Naive thymus-derived CD4-positive, alpha-beta T cell (primary cell): ENCODE measurements at regions of chr12 and their contacts with region 1.

Region 1: GRCh38 chr12:21657326-21658077 is at the start of gene LDHB:
- DNase-seq: peak; percentile 69 to 96 (median 91)
- ATAC-seq: peak; percentile 98
- H3K4me3 ChIP-seq: peak within 1 kb of the TSS; percentile 89
- H3K4me3 Mint-ChIP-seq: peak within 1 kb of the TSS; percentile 89 to 100 (median 97)
- H3K27ac ChIP-seq: peak within 1 kb of the TSS; percentile 83
- H3K27ac Mint-ChIP-seq: peak within 1 kb of the TSS; percentile 86 to 100 (median 95)
- H3K4me1 ChIP-seq: peaks cover 25 to 47% of the 10 kb centered on the region in 2 donors
- H3K4me1 Mint-ChIP-seq: peaks cover 36 to 70% (median 61%) of the 10 kb centered on the region in 7 donors
- H3K27me3 ChIP-seq: no peaks in the 10 kb centered on the region
- H3K27me3 Mint-ChIP-seq: peaks cover 0 to 8% (median 0%) of the 10 kb centered on the region in 5 donors
- total RNA-seq, gene LDHB: 630 to 1,306 (median 1,079) TPM

Region 2: DNA sequence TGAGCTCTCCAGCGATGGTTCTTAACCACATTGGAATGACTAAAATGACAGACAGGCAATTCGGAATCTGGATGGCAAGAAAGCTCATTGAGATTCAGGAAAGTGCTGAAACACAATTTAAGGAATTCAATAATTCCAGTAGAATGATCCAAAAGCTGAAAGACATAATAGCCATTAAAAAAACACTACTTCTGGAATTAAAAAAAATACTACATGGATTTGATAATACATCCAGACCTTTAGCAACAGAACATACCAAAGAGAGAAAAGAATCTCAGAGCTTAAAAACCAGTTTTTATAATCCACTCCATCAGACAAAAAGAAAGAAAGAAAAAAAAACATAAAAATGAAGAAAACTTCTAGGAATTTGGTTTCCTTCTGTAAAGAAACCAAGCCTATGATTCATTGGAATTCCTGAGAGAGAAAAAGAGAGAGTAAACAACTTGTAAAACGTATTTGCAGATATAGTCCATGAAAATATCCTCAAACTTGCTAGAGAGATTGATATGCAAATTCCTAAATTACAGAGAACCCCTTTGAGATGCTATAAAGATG is 473.7 kb before region 1 on chr12:
- CTCF ChIA-PET with region 1: no interaction called
- POLR2A ChIA-PET with region 1: no interaction called
- intact Hi-C with region 1: no loop called
- DNase-seq: no peak
- ATAC-seq: no peak
- H3K4me3 ChIP-seq: no peak overlapping the region
- H3K4me3 Mint-ChIP-seq: no peak overlapping the region
- H3K27ac ChIP-seq: no peak overlapping the region
- H3K27ac Mint-ChIP-seq: no peak overlapping the region
- H3K4me1 ChIP-seq: no peaks in the 10 kb centered on the region
- H3K4me1 Mint-ChIP-seq: no peaks in the 10 kb centered on the region
- H3K27me3 ChIP-seq: no peaks in the 10 kb centered on the region
- H3K27me3 Mint-ChIP-seq: no peaks in the 10 kb centered on the region

Region 3: GRCh38 chr12:21438643-21439042 is 218.9 kb before region 1 on chr12:
- CTCF ChIA-PET with region 1: no interaction called
- POLR2A ChIA-PET with region 1: interaction called, 7 read pairs
- intact Hi-C with region 1: loop called (anchors 1 kb)
- DNase-seq: no peak
- ATAC-seq: no peak
- H3K4me3 ChIP-seq: peak overlapping the region; percentile 91
- H3K4me3 Mint-ChIP-seq: peak overlapping the region; percentile 94 to 99 (median 98)
- H3K27ac ChIP-seq: peak overlapping the region; percentile 81
- H3K27ac Mint-ChIP-seq: peak overlapping the region; percentile 92 to 99 (median 97)
- H3K4me1 ChIP-seq: peaks cover 11 to 22% of the 10 kb centered on the region in 2 donors
- H3K4me1 Mint-ChIP-seq: peaks cover 32 to 72% (median 49%) of the 10 kb centered on the region in 7 donors
- H3K27me3 ChIP-seq: no peaks in the 10 kb centered on the region
- H3K27me3 Mint-ChIP-seq: peaks cover 0 to 10% (median 0%) of the 10 kb centered on the region in 5 donors

Region 4: DNA sequence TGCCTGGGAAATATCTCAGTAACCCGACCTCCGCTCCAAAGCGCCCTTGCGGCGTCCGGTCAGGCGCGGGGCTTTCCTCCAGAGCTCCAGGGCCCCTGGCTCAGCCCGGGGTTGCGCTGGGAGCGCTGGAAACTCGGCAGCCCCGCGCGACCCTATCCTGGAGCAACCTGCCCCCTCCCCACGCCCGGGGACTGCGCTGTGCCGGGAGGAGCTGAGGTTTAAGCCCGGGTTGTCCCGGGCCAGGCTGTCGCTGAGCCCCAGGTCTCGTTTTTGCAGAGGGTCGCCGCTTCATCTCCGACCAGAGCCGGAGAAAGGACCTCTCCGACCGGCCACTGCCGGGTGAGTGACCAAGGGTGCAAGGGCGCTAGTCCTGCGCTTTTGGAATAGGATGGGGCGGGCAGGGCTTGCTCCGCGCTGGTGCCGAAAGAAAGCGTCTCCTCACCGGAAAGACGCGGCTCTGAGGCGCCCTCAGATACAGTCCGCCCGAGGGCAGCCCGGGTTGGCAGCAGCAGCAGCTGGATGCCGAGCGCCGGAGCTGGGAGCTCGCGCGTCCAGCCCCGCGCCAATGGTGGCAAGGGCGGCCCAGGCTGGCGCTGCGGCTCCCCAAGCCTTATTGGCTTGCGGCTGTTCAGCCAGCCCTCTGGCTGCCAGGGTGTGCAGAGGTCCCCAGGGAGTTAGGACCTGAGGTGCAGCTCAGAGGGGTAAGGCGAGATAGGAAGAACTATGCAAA is 129.9 kb before region 1 on chr12:
- CTCF ChIA-PET with region 1: no interaction called
- POLR2A ChIA-PET with region 1: interaction called, 3 read pairs
- intact Hi-C with region 1: loop called in 1 of 2 experiments (anchors 5 kb)
- DNase-seq: peak; percentile 33 to 69 (median 61)
- ATAC-seq: peak; percentile 95
- H3K4me3 ChIP-seq: peak overlapping the region; percentile 63
- H3K4me3 Mint-ChIP-seq: peak overlapping the region; percentile 69 to 87 (median 80)
- H3K27ac ChIP-seq: no peak overlapping the region
- H3K27ac Mint-ChIP-seq: no peak overlapping the region
- H3K4me1 ChIP-seq: peaks cover 0 to 3% of the 10 kb centered on the region in 2 donors
- H3K4me1 Mint-ChIP-seq: peaks cover 0 to 13% (median 8%) of the 10 kb centered on the region in 7 donors
- H3K27me3 ChIP-seq: no peaks in the 10 kb centered on the region
- H3K27me3 Mint-ChIP-seq: peaks cover 18 to 54% (median 37%) of the 10 kb centered on the region in 5 donors

Region 5: GRCh38 chr12:21631367-21631766 is 26.1 kb before region 1 on chr12:
- CTCF ChIA-PET with region 1: interaction called, 3 read pairs
- POLR2A ChIA-PET with region 1: interaction called, 21 read pairs
- intact Hi-C with region 1: no loop called
- DNase-seq: no peak
- ATAC-seq: no peak
- H3K4me3 ChIP-seq: no peak overlapping the region
- H3K4me3 Mint-ChIP-seq: peak overlapping the region in 1 of 10 donors; percentile 13
- H3K27ac ChIP-seq: no peak overlapping the region
- H3K27ac Mint-ChIP-seq: peak overlapping the region in 6 of 9 donors; percentile 49 to 76 (median 64)
- H3K4me1 ChIP-seq: no peaks in the 10 kb centered on the region
- H3K4me1 Mint-ChIP-seq: peaks cover 0 to 35% (median 16%) of the 10 kb centered on the region in 7 donors
- H3K27me3 ChIP-seq: no peaks in the 10 kb centered on the region
- H3K27me3 Mint-ChIP-seq: no peaks in the 10 kb centered on the region

Region 6: DNA sequence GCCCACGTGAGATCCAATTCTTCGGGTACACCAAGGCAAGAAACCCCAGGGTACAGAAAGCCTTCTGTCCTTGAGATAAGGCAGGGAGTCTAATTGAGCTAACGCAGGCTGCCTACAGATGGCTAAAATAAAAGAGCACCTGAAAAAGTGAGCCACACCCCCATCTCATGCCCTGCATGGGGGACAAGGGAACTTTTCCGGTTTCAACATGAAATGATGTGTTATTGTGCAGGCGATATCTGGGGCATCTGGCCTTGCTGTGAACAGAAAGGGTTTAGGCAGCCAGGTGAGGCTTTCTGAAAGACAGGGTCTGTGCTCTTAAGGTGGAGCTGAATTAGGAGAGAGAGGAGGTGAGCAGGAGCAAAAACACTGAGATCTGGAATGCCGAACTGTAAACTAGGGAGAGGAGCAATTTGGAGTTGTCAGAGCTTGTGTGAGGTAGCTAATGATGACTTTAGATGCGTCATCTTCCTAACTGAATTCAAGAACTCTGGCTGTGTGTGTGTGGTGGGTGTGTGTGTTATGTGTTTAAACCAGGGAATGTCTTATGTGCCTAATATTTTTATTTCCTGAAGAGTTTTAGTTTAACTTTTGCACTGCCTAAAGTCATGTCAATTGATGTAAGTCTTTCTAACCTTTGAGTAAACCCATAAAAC is 20.2 kb after region 1 on chr12:
- CTCF ChIA-PET with region 1: interaction called, 25 read pairs
- POLR2A ChIA-PET with region 1: interaction called, 242 read pairs
- intact Hi-C with region 1: loop called (anchors 1 kb)
- DNase-seq: peak in 7 of 9 donors; percentile 29 to 49 (median 42)
- ATAC-seq: peak; percentile 51
- H3K4me3 ChIP-seq: peak overlapping the region; percentile 47
- H3K4me3 Mint-ChIP-seq: peak overlapping the region; percentile 36 to 91 (median 86)
- H3K27ac ChIP-seq: peak overlapping the region; percentile 60
- H3K27ac Mint-ChIP-seq: peak overlapping the region in 8 of 9 donors; percentile 72 to 94 (median 88)
- H3K4me1 ChIP-seq: peaks cover 6 to 54% of the 10 kb centered on the region in 2 donors
- H3K4me1 Mint-ChIP-seq: peaks cover 26 to 68% (median 58%) of the 10 kb centered on the region in 7 donors
- H3K27me3 ChIP-seq: no peaks in the 10 kb centered on the region
- H3K27me3 Mint-ChIP-seq: peaks cover 0 to 3% (median 0%) of the 10 kb centered on the region in 5 donors

Region 7: DNA sequence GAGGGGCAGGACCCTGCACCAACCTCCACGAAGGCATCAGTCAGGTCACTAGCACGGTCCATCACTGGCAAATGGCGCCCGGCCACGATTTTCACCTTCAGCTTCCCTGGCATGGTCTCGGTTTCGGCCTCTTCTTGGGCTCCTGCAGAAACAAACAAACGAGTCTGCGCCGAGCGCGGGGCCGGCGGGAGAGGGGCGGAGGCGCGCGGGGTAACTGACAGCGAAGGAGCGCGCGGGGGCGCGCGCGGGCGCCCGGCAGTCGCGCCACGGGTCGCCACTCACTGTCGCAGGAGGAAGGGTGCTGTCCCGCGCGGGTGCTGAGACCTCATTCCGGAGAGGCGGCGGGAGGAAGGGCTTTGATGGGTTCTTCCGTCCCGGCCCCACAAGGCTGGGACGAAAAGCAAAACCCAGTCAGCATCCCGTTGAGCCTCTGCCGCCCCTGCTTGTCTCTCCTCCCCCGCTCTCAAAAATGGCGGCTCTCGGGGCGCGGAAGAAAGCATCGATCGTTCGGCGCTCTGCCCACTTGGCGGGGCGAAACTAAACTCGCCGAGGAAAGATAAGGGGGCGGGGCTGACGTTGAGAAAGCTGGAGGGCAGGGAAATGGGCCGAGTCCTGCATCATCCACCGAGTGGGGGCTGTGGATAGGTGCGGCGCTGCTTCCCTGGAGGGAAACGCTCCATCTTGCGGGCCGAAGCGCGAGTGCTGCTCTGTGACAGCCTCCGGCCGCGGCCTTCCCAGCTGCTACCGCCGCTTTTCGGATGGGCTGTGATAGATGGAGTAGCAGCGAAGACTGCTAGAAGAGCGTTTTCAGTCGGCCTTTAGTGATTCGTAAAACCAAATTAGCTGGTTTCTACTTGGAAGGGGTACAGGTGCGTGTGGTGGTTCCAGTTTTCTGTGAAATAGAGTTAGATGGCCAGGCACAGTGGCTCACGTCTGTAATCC is 886.8 kb after region 1 on chr12 and contains the start of gene C2CD5:
- CTCF ChIA-PET with region 1: no interaction called
- POLR2A ChIA-PET with region 1: interaction called, 6 read pairs
- intact Hi-C with region 1: loop called (anchors 1 to 5 kb)
- DNase-seq: peak; percentile 84 to 96 (median 96)
- ATAC-seq: peak; percentile 96
- H3K4me3 ChIP-seq: peak within 1 kb of the TSS; percentile 95
- H3K4me3 Mint-ChIP-seq: peak within 1 kb of the TSS; percentile 91 to 98 (median 92)
- H3K27ac ChIP-seq: peak within 1 kb of the TSS; percentile 79
- H3K27ac Mint-ChIP-seq: peak within 1 kb of the TSS; percentile 94 to 98 (median 95)
- H3K4me1 ChIP-seq: peaks cover 7 to 18% of the 10 kb centered on the region in 2 donors
- H3K4me1 Mint-ChIP-seq: peaks cover 32 to 47% (median 38%) of the 10 kb centered on the region in 7 donors
- H3K27me3 ChIP-seq: no peaks in the 10 kb centered on the region
- H3K27me3 Mint-ChIP-seq: peaks cover 0 to 12% (median 4%) of the 10 kb centered on the region in 5 donors
- total RNA-seq, gene C2CD5: 31.5 to 58.9 (median 47.1) TPM